Left ventricle myocardium inferior (tissue), 1 donor: ENCODE measurements at regions of chr15 and their contacts with region 1.

Region 1: GRCh38 chr15:99282121-99282520 is 30.8 kb downstream of the LRRC28 start:
- DNase-seq: no peak
- H3K4me3 ChIP-seq: no peak overlapping the region
- H3K27ac ChIP-seq: peak overlapping the region; percentile 44
- H3K4me1 ChIP-seq: peaks cover 24% of the 10 kb centered on the region
- H3K27me3 ChIP-seq: no peaks in the 10 kb centered on the region
- CTCF ChIP-seq: no peak

Region 2: DNA sequence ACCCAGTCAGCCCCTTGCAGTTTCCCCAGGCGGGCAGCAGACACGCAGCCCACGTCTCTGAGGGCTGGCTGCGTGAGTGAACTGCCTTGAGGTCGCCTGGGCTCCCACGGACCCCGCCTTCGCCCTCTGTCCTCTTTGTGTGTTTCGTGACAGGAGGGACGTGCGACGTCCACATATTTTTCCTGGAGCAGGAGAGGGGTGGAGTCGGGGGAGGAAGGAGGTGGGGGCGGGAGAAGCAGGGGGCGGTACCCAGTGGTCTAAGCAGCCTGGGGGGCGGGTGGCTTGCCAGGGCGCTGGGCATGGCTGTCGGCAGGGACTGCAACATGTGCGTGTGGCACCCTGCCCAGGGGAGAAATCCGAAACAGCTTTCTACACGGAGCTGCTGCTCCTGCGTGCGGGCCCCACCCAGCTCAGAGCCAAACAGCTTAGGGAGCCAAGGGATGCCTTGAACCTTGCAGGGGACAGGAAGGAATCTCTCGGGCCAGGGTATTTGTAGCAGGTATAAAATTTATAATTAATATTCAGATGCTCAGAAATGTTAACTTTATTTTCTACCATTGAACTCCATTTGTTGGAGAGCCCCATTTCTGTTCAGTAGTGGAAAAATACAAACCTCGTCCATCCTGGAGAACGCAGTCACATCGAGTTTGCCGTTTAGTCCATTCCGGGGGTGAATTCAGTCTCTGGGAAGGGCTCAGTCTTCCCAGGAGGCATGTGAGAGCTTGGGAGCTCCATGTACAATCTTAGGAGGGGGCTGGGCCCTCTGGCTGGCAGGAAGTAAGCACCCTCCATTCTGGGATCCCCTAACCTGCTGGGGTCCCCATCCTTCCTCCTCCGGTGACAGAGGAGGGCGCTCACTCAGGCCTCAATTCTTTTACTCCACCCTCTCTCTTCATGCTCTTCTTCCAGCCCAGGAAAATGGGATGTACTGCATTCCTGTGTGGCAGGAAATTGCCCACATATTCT is 204.5 kb after region 1 on chr15:
- intact Hi-C with region 1: no loop called
- DNase-seq: peak; percentile 89
- H3K4me3 ChIP-seq: peak overlapping the region; percentile 59
- H3K27ac ChIP-seq: peak overlapping the region; percentile 93
- H3K4me1 ChIP-seq: peaks cover 35% of the 10 kb centered on the region
- H3K27me3 ChIP-seq: no peaks in the 10 kb centered on the region
- CTCF ChIP-seq: no peak

Region 3: DNA sequence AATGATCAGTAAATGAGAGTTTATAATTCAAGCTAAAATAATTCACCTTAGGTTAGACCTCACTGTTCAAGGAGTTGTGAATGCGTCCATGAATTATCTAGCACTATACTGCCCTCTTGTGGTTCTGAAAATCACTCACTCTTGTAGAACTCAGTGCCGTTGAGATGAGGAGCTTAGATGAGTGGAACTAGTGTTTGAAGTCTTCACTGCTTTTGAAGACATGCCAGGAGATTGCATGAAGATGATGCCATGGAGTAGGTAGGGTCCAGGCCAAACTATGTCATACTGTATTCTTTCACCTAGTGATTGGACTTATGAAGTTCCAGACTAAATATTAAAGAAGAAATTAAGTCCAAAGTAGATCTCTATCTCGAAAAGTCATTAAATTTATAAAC is 422.3 kb after region 1 on chr15:
- intact Hi-C with region 1: loop called (anchors 5 kb)
- DNase-seq: no peak
- H3K4me3 ChIP-seq: peak overlapping the region; percentile 37
- H3K27ac ChIP-seq: peak overlapping the region; percentile 90
- H3K4me1 ChIP-seq: peaks cover 71% of the 10 kb centered on the region
- H3K27me3 ChIP-seq: no peaks in the 10 kb centered on the region
- CTCF ChIP-seq: peak; percentile 82

Region 4: DNA sequence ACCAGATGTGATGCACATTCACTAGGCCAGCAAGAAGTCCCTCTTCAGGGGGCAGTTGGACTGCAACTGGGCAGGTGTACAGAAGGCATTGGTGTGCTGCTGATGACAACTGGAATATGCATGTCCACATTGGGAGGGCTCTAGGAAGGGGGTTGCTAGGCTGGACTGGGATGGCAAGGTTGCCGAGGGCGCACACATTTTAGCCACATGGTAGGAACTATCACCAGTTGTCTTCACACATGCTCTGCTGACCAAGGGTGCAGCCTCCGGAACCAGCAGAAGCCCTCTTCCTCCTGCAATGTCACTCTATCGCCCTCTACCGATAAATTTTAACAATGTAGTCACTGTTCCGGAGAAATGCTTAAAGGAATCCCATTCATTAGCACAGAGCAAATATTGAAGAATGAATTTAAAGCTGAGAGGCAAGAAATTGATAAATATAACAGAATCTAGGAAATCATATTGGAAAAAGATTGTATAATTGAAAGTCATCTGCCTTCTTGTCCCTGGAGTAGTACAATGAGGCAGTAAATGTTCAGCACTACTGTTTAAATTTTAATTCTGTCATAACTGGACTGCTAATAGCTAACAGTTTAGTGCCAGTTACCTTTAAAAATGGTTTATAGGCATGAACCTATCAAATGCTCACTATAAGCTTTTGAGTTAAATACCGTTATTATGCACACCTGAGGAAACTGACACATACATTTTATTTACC is 473.7 kb after region 1 on chr15:
- intact Hi-C with region 1: loop called (anchors 10 kb)
- DNase-seq: no peak
- H3K4me3 ChIP-seq: no peak overlapping the region
- H3K27ac ChIP-seq: no peak overlapping the region
- H3K4me1 ChIP-seq: no peaks in the 10 kb centered on the region
- H3K27me3 ChIP-seq: no peaks in the 10 kb centered on the region
- CTCF ChIP-seq: peak; percentile 93